ENCODE measurements at regions of chr22 and their contacts with region 1.

Region 1: GRCh38 chr22:43001271-43002201 is 13.4 kb downstream of the PACSIN2 start:
- DNase-seq: no peak
- ATAC-seq: peak; percentile 21
- H3K4me3 Mint-ChIP-seq: no peak overlapping the region
- H3K27ac Mint-ChIP-seq: peak overlapping the region; percentile 82
- H3K4me1 Mint-ChIP-seq: peaks cover 84% of the 10 kb centered on the region
- H3K27me3 Mint-ChIP-seq: no peaks in the 10 kb centered on the region
- CTCF ChIP-seq: no peak

Region 2: GRCh38 chr22:42990139-42990767 is 11.3 kb before region 1 on chr22:
- CTCF ChIA-PET with region 1: interaction called, 14 read pairs
- POLR2A ChIA-PET with region 1: no interaction called
- DNase-seq: no peak
- ATAC-seq: peak; percentile 57
- H3K4me3 Mint-ChIP-seq: no peak overlapping the region
- H3K27ac Mint-ChIP-seq: no peak overlapping the region; the same call in 1 of the 2 replicates
- H3K4me1 Mint-ChIP-seq: peaks cover 50% of the 10 kb centered on the region
- H3K27me3 Mint-ChIP-seq: no peaks in the 10 kb centered on the region
- CTCF ChIP-seq: no peak